Sigmoid colon (tissue), 7 donors: ENCODE measurements at regions of chr13 and their contacts with region 1.

Region 1: DNA sequence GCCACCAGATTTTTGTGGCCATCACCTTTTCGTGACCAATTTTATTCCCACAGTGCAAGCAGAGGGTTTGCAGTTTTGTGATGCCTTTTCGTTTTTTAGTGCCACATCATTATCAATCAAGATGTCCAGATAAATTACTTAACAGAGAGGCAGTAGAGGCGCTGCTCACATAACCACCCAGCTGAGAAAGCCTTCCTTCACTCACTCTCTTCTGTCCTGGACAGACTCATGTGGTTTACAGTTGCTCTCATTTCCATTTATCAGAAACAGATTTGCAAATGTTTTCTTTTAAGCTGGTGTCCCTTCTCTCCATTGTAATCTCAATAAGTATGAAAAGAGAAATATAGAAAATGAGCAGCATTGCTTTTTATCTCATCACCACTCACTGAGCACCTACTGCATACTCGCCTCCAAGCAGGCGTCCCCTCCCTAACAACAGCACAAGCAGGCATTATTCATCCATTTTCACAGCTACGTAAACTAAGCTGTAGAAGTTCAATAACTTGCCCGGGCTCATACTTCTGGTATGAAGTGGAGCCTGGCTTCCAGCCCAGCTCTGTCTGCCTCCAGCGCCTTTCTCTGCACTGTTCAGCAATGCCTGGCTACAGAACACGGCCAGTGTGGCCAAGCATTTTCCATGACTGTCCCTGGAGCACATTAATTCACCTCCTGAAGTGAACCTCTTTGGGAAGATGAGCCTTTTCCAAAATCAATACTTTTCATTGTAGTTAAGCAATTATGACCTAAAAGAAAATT is 34.6 kb upstream of the KATNAL1 start:
- DNase-seq: peak; percentile 97
- H3K4me3 ChIP-seq: no peak overlapping the region
- H3K27ac ChIP-seq: peak overlapping the region; percentile 73 to 86 (median 80)
- H3K4me1 ChIP-seq: peaks cover 0 to 60% (median 54%) of the 10 kb centered on the region in 4 donors
- H3K27me3 ChIP-seq: no peaks in the 10 kb centered on the region
- CTCF ChIP-seq: no peak
- EP300 ChIP-seq: peak in 2 of 4 donors; percentile 41 to 53
- POLR2A ChIP-seq: no peak

Region 2: GRCh38 chr13:30125422-30126073 is 216.4 kb before region 1 on chr13:
- intact Hi-C with region 1: loop called (anchors 5 kb)
- DNase-seq: peak; percentile 90
- H3K4me3 ChIP-seq: no peak overlapping the region
- H3K27ac ChIP-seq: peak overlapping the region; percentile 64 to 91 (median 82)
- H3K4me1 ChIP-seq: peaks cover 0 to 66% (median 62%) of the 10 kb centered on the region in 4 donors
- H3K27me3 ChIP-seq: no peaks in the 10 kb centered on the region
- CTCF ChIP-seq: no peak
- EP300 ChIP-seq: peak; percentile 72 to 97 (median 88)
- POLR2A ChIP-seq: no peak

Region 3: GRCh38 chr13:30306762-30307193 is 35.2 kb before region 1 on chr13:
- intact Hi-C with region 1: loop called (anchors 2 kb)
- DNase-seq: peak; percentile 97
- H3K4me3 ChIP-seq: peak overlapping the region; percentile 60 to 87 (median 82)
- H3K27ac ChIP-seq: peak overlapping the region; percentile 89 to 95 (median 94)
- H3K4me1 ChIP-seq: peaks cover 0 to 57% (median 38%) of the 10 kb centered on the region in 4 donors
- H3K27me3 ChIP-seq: no peaks in the 10 kb centered on the region
- CTCF ChIP-seq: no peak
- EP300 ChIP-seq: no peak
- POLR2A ChIP-seq: no peak

Region 4: DNA sequence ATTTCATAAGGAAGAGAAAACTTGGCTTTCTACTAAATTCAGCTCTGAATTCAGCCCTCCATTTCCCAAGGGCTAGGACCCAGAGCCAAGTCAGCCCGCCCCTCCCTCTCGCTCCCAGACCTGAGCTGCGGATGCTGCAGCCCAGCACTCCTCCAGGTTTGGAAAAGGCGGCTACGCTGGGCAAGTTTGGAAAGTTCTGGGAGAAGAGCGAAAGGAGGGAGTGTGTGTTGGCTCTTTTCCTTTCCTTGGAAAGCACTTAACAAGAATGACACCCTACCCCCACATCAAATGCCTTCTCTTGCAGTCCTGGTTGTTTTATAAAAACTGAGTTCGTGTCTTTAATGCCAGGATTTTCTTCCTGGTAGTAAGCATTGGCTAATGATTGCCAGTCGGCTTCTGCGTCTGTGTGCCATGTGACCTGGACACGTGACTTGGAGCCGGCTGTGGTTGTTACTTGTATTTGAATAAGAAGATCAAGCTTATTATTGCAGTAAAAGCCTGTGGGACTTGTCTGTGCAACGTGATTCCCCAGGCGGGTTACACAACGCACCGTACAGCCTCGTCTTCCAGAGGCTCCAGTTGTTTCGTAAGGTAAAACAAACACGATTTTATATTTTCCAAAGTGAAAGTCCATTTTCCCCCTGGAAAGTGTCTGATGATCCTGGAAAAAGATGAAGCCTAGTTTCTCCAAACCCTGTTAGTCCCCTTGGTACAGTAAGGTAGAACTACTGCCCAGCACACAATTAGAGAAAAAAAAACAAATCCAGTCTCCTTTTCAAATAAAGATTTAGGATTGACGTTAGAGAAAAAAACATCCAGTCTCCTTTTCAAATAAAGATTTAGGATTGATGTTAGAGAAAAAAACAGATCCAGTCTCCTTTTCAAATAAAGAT is 53.4 kb after region 1 on chr13:
- intact Hi-C with region 1: loop called (anchors 2 kb)
- DNase-seq: peak; percentile 99
- H3K4me3 ChIP-seq: peak overlapping the region; percentile 49 to 65 (median 57)
- H3K27ac ChIP-seq: peak overlapping the region; percentile 90 to 97 (median 94)
- H3K4me1 ChIP-seq: peaks cover 0 to 15% (median 2%) of the 10 kb centered on the region in 4 donors
- H3K27me3 ChIP-seq: no peaks in the 10 kb centered on the region
- CTCF ChIP-seq: no peak
- EP300 ChIP-seq: peak in 2 of 4 donors; percentile 2 to 69
- POLR2A ChIP-seq: peak; percentile 38 to 60